ENCODE measurements at regions of chr1 and their contacts with region 1.

Region 1: GRCh38 chr1:15961492-15961891 is 14.4 kb downstream of the ZBTB17 start:
- DNase-seq: no peak
- ATAC-seq: no peak
- H3K4me3 ChIP-seq: no peak overlapping the region
- H3K27ac ChIP-seq: no peak overlapping the region
- H3K4me1 ChIP-seq: peaks cover 9% of the 10 kb centered on the region
- H3K27me3 ChIP-seq: no peaks in the 10 kb centered on the region
- CTCF ChIP-seq: no peak

Region 2: GRCh38 chr1:15975805-15976680 is 14.6 kb after region 1 on chr1 and contains the start of gene ZBTB17:
- CTCF ChIA-PET with region 1: interaction called, 14 read pairs
- POLR2A ChIA-PET with region 1: interaction called, 5 read pairs
- in situ Hi-C with region 1: no loop called
- intact Hi-C with region 1: no loop called
- DNase-seq: peak; percentile 67
- ATAC-seq: peak; percentile 98
- H3K4me3 ChIP-seq: peak within 1 kb of the TSS; percentile 62 to 63
- H3K27ac ChIP-seq: peak within 1 kb of the TSS; percentile 82
- H3K4me1 ChIP-seq: peaks cover 10% of the 10 kb centered on the region
- H3K27me3 ChIP-seq: no peaks in the 10 kb centered on the region
- CTCF ChIP-seq: no peak
- total RNA-seq, gene ZBTB17: 41.6 TPM

Region 3: GRCh38 chr1:16139473-16139962 is 178.0 kb after region 1 on chr1:
- CTCF ChIA-PET with region 1: no interaction called
- POLR2A ChIA-PET with region 1: no interaction called
- in situ Hi-C with region 1: no loop called
- intact Hi-C with region 1: no loop called
- DNase-seq: no peak
- ATAC-seq: peak; percentile 22
- H3K4me3 ChIP-seq: no peak overlapping the region
- H3K27ac ChIP-seq: peak overlapping the region; percentile 83
- H3K4me1 ChIP-seq: peaks cover 83% of the 10 kb centered on the region
- H3K27me3 ChIP-seq: no peaks in the 10 kb centered on the region
- CTCF ChIP-seq: no peak

Measured in Panc1 (cell line).